Activated naive CD4-positive, alpha-beta T cell treated with anti-CD3 and anti-CD28 coated beads for 36 hours (primary cell): ENCODE measurements at regions of chr12 and their contacts with region 1.

Region 1: DNA sequence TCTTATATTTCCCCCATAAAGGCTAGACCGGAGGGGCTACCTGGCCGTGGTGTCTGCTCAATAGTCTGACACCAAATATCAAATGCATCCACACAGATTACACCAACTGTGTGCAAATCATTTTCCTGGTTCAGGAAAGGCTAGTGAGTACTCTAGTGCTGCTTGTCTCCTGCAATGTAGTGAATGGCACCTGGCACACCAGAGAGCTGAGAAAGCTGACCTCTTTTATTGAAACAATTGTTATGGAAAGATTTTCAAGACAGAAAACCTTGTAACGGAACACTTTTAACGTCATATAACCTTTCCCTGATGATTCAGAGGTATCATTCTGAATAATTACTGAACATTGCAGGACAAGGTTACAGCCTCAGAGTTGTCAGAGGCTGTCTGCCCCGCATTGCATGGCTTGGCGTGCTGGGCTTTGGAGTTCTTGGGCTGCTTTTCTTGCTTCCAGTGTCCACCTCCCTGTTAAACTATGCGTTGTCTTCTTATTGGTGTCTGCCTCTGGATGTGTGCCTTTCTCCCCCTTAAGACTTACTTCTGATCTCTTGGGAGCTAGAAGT is 40.7 kb upstream of the HDAC7 start:
- DNase-seq: peak; percentile 69
- H3K4me3 Mint-ChIP-seq: peak overlapping the region; percentile 13
- H3K27ac Mint-ChIP-seq: peak overlapping the region; percentile 92
- H3K4me1 Mint-ChIP-seq: peaks cover 44% of the 10 kb centered on the region
- H3K27me3 Mint-ChIP-seq: no peaks in the 10 kb centered on the region

Region 2: GRCh38 chr12:47828608-47829536 is 31.5 kb before region 1 on chr12:
- CTCF ChIA-PET with region 1: no interaction called
- intact Hi-C with region 1: loop called (anchors 1 kb)
- DNase-seq: peak; percentile 63
- H3K4me3 Mint-ChIP-seq: peak overlapping the region; percentile 63
- H3K27ac Mint-ChIP-seq: peak overlapping the region; percentile 86
- H3K4me1 Mint-ChIP-seq: peaks cover 86% of the 10 kb centered on the region
- H3K27me3 Mint-ChIP-seq: no peaks in the 10 kb centered on the region

Region 3: DNA sequence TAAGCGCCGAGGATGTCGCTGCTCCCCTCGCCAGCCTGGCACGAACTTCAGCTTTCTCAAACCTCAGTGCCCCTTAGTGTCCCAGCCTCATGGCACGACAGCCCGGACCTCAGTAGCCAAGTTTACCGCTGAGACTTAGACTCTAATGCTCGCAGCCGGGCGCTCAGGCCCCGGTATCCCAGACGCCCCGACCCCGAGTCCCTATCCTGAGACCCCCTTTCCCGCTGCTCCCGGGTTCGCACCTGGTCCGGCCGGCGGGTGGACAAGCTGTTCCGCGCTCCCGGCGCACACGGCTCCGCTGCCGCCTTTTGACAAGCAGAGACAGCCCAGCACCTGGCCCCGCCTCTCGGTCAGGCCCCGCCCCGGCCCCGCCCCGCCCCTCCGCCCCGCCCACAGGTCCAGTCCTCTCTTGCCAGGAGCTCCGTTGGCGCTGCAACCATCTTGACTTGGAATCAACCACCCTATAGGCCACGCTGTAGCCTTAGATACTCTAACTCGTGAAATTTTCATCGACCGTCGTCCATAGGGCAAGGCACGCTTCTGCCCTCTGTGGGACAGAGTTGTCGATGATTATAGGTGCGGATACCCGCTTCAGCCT is 44.5 kb after region 1 on chr12 and contains the start of gene VDR:
- CTCF ChIA-PET with region 1: interaction called, 4 read pairs
- intact Hi-C with region 1: loop called (anchors 1 kb)
- DNase-seq: peak; percentile 81
- H3K4me3 Mint-ChIP-seq: peak within 1 kb of the TSS; percentile 98
- H3K27ac Mint-ChIP-seq: peak within 1 kb of the TSS; percentile 93
- H3K4me1 Mint-ChIP-seq: peaks cover 42% of the 10 kb centered on the region
- H3K27me3 Mint-ChIP-seq: peaks cover 19% of the 10 kb centered on the region
- total RNA-seq, gene VDR: 56.4 to 57.7 TPM

Region 4: DNA sequence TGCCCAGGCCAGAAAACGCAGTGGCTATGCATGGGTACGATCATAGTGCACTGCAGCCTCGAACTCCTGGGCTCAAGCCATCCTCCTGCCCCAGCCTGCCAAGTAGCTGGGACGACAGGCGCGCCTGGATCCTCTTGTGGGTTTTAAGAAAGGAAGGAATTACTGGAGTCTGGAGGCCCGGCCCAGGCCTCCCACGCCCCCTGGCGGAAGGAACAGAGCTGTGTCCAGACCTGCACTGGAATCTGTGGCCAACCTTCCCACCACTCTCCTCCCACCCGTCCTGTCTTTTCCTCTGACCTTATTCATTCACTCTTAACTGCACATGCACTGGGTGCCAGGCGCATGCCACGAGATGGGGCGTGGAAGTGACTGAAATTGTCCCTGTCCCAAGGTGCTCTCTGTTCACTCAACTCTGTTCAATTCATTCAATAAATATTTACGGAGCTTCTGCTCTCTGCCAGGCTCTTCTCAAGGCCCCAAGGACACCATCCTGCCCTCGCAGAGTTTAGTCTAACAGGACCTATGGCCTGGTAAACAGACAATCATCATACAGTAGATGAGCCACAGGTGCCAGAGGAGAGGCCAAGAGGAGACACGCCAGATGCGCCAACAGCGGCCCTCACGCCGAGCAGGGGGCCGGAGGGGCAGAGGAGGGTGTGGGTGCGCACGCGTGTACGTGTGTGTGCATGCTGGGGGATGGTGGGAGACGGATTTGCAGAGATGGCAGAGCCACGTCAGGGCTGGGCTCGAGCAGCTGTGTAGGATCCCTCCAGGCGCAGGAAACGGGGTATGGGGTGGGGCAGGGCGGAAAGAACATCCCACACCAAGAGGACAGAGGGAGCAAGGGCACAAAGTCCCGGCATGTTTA is 89.3 kb after region 1 on chr12:
- CTCF ChIA-PET with region 1: interaction called, 10 read pairs
- intact Hi-C with region 1: no loop called
- DNase-seq: peak; percentile 72
- H3K4me3 Mint-ChIP-seq: no peak overlapping the region
- H3K27ac Mint-ChIP-seq: no peak overlapping the region
- H3K4me1 Mint-ChIP-seq: peaks cover 4% of the 10 kb centered on the region
- H3K27me3 Mint-ChIP-seq: no peaks in the 10 kb centered on the region